OCI-LY7 (cell line): ENCODE measurements at regions of chr1 and their contacts with region 1.

Region 1: GRCh38 chr1:84973498-84974334 is 23.2 kb downstream of the MCOLN2 start:
- DNase-seq: peak; percentile 61
- H3K4me3 ChIP-seq: peak overlapping the region; percentile 26
- H3K27ac ChIP-seq: peak overlapping the region; percentile 54
- H3K4me1 ChIP-seq: peaks cover 52% of the 10 kb centered on the region
- CTCF ChIP-seq: peak; percentile 67

Region 2: DNA sequence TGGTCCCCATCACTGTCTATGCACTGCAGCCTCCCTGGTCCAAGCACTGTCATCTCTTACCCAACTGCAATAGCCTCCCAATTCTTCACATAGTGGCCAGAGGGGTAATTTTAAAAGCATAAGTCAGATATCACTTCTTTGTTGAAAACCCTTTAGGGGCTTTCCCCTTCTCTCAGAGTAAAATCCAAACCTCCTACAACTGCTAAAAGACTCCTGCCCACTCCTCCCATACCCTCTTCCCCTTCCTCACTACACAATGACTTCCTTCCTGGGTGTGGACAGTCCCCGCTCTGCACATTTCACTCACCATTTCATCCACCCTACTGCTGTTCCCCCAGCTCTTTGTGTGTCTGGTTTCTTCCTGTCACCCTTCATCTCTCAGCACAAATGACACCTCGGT is 14.9 kb after region 1 on chr1:
- CTCF ChIA-PET with region 1: interaction called, 3 read pairs
- POLR2A ChIA-PET with region 1: interaction called, 12 read pairs
- intact Hi-C with region 1: loop called (anchors 2 kb)
- DNase-seq: peak; percentile 33
- H3K4me3 ChIP-seq: peak overlapping the region; percentile 43
- H3K27ac ChIP-seq: peak overlapping the region; percentile 63
- H3K4me1 ChIP-seq: peaks cover 68% of the 10 kb centered on the region
- CTCF ChIP-seq: no peak

Region 3: DNA sequence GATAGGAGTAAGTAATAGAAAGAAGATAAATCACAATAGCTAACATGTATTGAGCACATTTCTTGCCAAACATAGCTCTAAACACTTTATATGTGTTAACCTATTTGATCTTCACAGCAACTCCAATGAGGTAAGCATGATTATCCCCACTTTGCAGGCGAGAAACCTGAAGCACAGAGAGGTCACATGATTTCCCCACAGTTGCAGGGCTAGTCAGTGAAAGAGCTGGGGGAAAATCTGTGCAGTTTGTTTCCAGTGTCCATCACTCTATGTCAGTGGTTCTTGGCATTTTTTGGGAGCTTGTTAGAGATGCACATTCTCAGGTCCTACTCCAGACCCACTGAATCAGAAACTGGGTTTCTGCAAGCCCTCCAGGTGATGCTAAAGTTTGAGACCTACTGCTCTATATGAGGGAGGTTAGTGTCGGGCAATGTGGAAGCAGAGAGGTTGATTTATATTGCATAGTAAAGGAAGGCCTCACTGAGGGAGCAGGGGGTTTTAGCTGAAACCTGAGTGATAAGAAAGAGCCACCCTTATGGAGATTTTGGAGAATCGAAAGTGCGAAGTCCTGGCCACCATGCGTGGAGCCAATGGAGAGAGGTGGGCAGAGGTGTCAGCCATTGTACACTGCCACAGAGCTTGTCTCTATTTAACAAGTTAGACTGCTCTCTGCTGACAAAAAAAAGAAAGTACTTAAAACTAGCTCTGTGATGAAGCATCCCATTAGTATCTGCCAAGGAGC is 53.7 kb after region 1 on chr1:
- CTCF ChIA-PET with region 1: no interaction called
- POLR2A ChIA-PET with region 1: no interaction called
- intact Hi-C with region 1: loop called (anchors 1 kb)
- DNase-seq: peak; percentile 58
- H3K4me3 ChIP-seq: no peak overlapping the region
- H3K27ac ChIP-seq: no peak overlapping the region
- H3K4me1 ChIP-seq: peaks cover 4% of the 10 kb centered on the region
- CTCF ChIP-seq: peak; percentile 70

Region 4: GRCh38 chr1:85214657-85215056 is 240.9 kb after region 1 on chr1:
- CTCF ChIA-PET with region 1: no interaction called
- POLR2A ChIA-PET with region 1: no interaction called
- intact Hi-C with region 1: no loop called
- DNase-seq: no peak
- H3K4me3 ChIP-seq: no peak overlapping the region
- H3K27ac ChIP-seq: no peak overlapping the region
- H3K4me1 ChIP-seq: no peaks in the 10 kb centered on the region
- CTCF ChIP-seq: no peak